ENCODE measurements at regions of chr2 and their contacts with region 1.

Region 1: DNA sequence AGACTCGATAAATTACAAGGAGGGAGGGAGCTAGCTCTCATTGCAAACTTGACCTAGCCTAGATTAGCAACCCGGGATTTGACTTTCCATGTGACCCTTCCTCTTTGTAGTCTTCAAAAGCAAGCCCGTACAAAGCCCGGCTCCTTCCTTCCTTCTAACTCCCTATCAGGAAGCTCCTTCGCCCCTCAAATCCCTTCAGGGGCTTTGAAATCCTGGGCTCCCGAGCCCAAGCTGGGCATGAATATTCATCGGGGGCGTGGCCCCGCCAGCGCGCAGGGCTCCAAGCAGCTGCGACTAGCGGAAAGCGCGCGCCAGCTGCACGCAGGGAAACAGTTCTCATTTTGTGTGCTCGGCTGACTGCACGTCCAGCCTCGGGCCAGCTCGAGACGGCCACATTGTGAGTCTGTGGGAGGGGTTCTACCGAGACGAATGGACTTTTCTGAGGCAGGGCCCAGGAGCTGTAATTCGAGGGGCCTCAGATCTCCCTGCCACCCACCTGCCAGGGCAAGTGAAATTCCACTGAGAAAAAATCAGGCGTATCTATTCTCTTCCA is 84.0 kb upstream of the PELI1 start:
- DNase-seq: peak; percentile 79 to 80
- H3K4me3 ChIP-seq: peak overlapping the region; percentile 45
- H3K4me3 Mint-ChIP-seq: peak overlapping the region; percentile 89
- H3K27ac Mint-ChIP-seq: peak overlapping the region; percentile 73
- H3K4me1 ChIP-seq: 0 out of 2 replicates have a peak, but pooled peaks cover 5% of the 10 kb centered on the region
- H3K4me1 Mint-ChIP-seq: peaks cover 14% of the 10 kb centered on the region
- H3K27me3 ChIP-seq: no peaks in the 10 kb centered on the region
- H3K27me3 Mint-ChIP-seq: no peaks in the 10 kb centered on the region
- CTCF ChIP-seq: no peak

Region 2: GRCh38 chr2:64052468-64053241 is 175.5 kb before region 1 on chr2:
- CTCF ChIA-PET with region 1: interaction called, 3 read pairs
- POLR2A ChIA-PET with region 1: no interaction called
- intact Hi-C with region 1: loop called (anchors 1 kb)
- DNase-seq: no peak
- H3K4me3 ChIP-seq: no peak overlapping the region
- H3K4me3 Mint-ChIP-seq: no peak overlapping the region
- H3K27ac Mint-ChIP-seq: peak overlapping the region; percentile 32
- H3K4me1 ChIP-seq: peaks cover 26% of the 10 kb centered on the region
- H3K4me1 Mint-ChIP-seq: peaks cover 41% of the 10 kb centered on the region
- H3K27me3 ChIP-seq: no peaks in the 10 kb centered on the region
- H3K27me3 Mint-ChIP-seq: no peaks in the 10 kb centered on the region
- CTCF ChIP-seq: no peak

Region 3: DNA sequence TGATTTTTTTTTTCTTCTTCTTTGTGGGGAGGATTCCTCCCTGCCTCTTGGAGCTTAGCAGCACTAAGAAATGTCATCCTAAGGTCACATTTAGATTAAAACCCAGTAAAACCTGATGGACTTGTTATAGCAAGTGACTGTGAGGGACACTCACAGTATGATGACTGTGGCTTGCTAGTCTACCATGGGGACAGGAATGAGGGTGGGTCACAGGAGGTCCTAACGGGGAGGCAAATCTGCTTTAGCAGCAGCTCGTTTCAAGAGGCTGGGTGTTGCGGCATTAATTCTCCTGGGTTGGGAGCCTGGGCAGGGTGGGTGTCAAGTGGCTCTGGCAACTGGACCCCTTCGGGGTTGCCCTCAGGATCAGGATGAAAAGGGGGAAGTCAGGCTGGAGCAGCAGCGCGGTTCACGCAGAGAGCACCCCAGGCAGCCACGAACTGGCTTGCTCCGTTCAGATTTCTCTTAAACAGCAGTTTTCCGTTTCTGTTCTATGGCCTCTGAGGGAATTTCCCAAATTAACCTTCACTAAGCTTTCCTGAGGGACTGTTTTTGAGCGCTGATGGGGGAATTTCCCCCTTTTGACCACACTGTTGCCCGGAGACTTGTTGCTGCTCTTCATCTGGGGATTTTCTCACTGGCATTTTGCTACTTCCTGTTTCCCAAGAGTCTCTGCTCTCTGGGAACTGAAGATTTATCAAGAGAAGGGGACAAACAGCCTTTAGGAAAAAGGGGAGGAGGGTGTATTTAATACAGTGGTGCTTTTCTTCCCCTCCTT is 24.2 kb before region 1 on chr2:
- CTCF ChIA-PET with region 1: no interaction called
- POLR2A ChIA-PET with region 1: no interaction called
- intact Hi-C with region 1: no loop called
- DNase-seq: peak; percentile 59 to 65
- H3K4me3 ChIP-seq: no peak overlapping the region
- H3K4me3 Mint-ChIP-seq: peak overlapping the region; percentile 22
- H3K27ac Mint-ChIP-seq: peak overlapping the region; percentile 88
- H3K4me1 ChIP-seq: peaks cover 29% of the 10 kb centered on the region
- H3K4me1 Mint-ChIP-seq: peaks cover 29% of the 10 kb centered on the region
- H3K27me3 ChIP-seq: no peaks in the 10 kb centered on the region
- H3K27me3 Mint-ChIP-seq: no peaks in the 10 kb centered on the region
- CTCF ChIP-seq: no peak

Measured in Caco-2 (cell line).